Heart left ventricle (tissue), 16 donors: ENCODE measurements at regions of chr15 and their contacts with region 1.

Region 1: GRCh38 chr15:37416103-37416502 is 315.8 kb upstream of the MEIS2 start:
- DNase-seq: no peak
- ATAC-seq: no peak
- H3K4me3 ChIP-seq: no peak overlapping the region
- H3K27ac ChIP-seq: no peak overlapping the region
- H3K4me1 ChIP-seq: no peaks in the 10 kb centered on the region
- H3K27me3 ChIP-seq: no peaks in the 10 kb centered on the region
- CTCF ChIP-seq: no peak
- POLR2A ChIP-seq: no peak

Region 2: DNA sequence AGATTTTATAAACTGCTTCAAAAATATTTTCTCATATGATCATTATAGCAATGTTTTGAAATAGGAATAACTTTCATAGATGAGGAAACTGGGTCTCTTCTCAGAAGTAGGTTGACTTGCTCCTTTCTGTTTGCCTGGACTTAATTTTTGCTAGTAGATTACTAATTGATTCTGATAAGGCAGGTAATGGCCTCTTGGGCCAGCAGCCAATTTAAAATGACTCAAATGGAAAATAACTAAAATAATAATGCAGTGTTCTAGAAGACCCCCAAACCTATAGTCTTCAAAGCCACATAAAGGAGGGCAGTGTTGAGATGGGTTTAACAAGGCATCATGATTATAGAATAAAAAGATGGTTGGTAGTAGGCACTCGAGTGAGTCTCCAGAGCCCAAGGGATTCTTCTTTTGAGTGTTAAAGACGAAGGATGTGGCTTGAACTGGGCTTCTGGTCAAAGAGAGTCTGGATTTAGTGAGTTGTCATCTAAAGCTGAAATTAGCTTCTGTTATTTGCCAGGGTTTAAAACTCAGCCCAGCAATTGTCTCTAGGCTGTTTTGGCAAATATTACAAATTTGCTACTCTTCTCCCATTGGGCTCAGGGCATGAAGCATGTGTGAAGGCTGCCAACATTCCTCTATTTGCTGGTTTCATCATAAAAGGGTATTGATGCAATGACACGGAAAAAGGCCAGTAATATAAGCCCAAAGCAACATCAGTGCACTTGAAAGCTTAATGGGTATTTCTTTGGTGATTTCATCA is 18.7 kb before region 1 on chr15:
- intact Hi-C with region 1: loop called in 1 of 10 experiments (anchors 1 kb)
- DNase-seq: no peak
- ATAC-seq: no peak
- H3K4me3 ChIP-seq: no peak overlapping the region
- H3K27ac ChIP-seq: no peak overlapping the region
- H3K4me1 ChIP-seq: peaks cover 0 to 9% (median 0%) of the 10 kb centered on the region in 12 donors
- H3K27me3 ChIP-seq: no peaks in the 10 kb centered on the region
- CTCF ChIP-seq: no peak
- POLR2A ChIP-seq: no peak

Region 3: DNA sequence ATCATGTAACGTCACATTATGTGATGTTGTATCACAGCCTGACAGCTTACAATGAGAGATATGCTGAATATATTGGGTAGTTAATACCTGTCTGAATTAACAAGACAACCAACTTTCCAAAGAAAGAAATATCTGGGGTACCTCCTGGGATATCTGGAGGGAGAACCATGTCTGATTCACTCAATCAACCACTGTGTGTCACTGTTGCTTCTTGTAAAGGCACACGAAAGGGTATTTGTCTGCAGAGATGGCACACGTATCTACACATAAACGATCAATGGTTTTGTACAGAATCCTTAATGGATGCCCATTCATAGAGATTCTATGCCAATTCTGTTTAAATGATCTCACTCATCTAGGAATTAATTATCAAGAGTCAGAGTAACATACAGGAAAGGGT is 266.2 kb after region 1 on chr15:
- intact Hi-C with region 1: no loop called
- DNase-seq: no peak
- ATAC-seq: no peak
- H3K4me3 ChIP-seq: no peak overlapping the region
- H3K27ac ChIP-seq: no peak overlapping the region
- H3K4me1 ChIP-seq: no peaks in the 10 kb centered on the region
- H3K27me3 ChIP-seq: no peaks in the 10 kb centered on the region
- CTCF ChIP-seq: no peak
- POLR2A ChIP-seq: no peak